CD4-positive, alpha-beta memory T cell (primary cell): ENCODE measurements at regions of chr1 and their contacts with region 1.

Region 1: DNA sequence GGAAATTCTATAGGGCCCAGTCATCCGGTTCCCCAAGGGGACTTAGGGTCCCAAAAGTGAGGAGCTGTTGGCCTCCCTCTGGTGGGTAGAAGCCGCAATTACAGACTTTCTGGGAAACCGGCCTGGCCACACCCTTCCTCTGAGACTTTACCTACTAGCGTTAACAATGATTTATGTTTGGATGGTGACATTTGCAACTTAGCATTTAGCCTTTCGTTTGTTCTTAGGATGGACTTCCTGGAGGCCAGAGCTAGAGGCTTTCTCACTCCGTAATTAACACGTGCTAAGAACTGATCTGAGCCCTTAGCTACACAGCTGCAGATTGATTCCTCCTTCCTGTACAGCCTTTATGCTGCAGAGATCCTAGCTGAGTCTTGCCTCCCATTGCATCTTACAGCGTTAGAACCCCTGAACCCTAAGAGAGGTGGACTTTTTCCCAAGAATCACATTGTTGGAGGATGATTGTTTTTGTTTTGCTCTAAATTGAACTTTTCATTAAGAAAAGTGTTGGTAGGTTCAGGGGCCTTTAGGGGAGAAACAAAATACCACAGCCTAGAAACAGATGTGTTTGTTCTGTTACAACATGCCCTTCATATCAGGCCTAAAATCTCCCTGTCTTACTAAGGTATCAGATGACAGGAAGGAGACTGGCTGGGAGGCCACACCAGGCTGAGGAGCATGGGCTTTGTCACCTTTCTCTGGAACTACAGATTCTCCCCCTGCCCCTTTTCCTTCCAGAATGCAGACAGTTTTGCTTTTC is 2.0 kb downstream of the S100A11 start:
- DNase-seq: peak; percentile 75 to 87 (median 80)
- H3K4me3 ChIP-seq: peak overlapping the region; percentile 73 to 77
- H3K4me3 Mint-ChIP-seq: peak overlapping the region; percentile 91 to 100 (median 100)
- H3K27ac ChIP-seq: peak overlapping the region; percentile 88
- H3K27ac Mint-ChIP-seq: peak overlapping the region; percentile 97 to 100 (median 99)
- H3K4me1 ChIP-seq: peaks cover 38% of the 10 kb centered on the region
- H3K4me1 Mint-ChIP-seq: peaks cover 23 to 54% (median 43%) of the 10 kb centered on the region in 4 donors
- H3K27me3 ChIP-seq: no peaks in the 10 kb centered on the region
- H3K27me3 Mint-ChIP-seq: no peaks in the 10 kb centered on the region

Region 2: DNA sequence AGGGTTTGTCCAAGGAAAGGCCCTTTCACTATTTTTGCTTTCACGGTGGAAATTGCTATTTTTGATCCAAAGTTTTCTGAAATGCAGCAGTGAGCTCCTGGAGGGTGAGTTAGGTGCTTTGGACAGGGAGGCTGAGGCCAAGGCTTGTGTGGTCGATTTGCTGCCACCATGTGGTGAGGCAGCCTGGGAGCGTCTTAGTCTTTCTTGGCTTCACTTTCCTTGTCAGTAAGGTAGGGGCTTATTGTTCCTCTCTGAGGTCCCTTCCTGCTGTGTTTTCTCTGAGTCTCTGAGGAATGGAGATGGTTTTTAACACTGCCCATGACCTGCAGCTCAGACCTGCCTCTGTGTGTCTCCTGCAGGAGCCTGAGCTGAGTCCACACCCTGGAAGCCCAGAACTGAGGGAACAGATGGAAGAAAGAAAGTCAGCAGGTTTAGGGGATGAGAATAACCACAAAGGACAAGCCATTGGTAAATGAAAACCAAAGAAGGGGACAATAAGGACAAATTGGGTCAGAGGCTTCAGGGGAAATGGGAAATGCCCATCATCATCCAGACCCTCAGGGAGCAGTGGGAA is 21.1 kb before region 1 on chr1:
- CTCF ChIA-PET with region 1: interaction called, 11 read pairs
- POLR2A ChIA-PET with region 1: interaction called, 7 read pairs
- intact Hi-C with region 1: no loop called
- DNase-seq: peak in 2 of 5 donors; percentile 31 to 33
- H3K4me3 ChIP-seq: no peak overlapping the region
- H3K4me3 Mint-ChIP-seq: no peak overlapping the region
- H3K27ac ChIP-seq: no peak overlapping the region
- H3K27ac Mint-ChIP-seq: no peak overlapping the region
- H3K4me1 ChIP-seq: no peaks in the 10 kb centered on the region
- H3K4me1 Mint-ChIP-seq: peaks cover 0 to 5% (median 2%) of the 10 kb centered on the region in 4 donors
- H3K27me3 ChIP-seq: no peaks in the 10 kb centered on the region
- H3K27me3 Mint-ChIP-seq: peaks cover 2 to 3% of the 10 kb centered on the region in 2 donors

Region 3: DNA sequence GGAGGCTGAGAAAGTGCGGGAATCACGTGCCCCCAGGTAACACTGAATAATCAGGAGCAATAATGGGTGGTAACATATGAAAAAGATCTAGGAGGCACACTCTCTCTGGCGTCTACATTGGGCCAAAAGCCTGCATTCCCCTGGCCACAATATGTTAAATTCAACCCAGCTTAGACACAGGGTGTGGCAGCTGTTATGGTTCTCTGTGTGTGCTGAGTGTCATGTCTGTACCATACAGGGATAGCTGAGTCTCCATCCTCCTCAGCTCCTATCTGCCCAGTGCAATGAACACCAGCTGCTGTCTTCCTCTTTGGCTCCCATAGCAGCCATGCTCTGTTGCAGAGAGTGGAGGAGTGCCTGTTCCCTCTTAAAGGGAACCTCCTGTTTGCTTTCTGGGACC is 12.4 kb before region 1 on chr1:
- CTCF ChIA-PET with region 1: interaction called, 10 read pairs
- POLR2A ChIA-PET with region 1: interaction called, 3 read pairs
- intact Hi-C with region 1: no loop called
- DNase-seq: no peak
- H3K4me3 ChIP-seq: no peak overlapping the region
- H3K4me3 Mint-ChIP-seq: no peak overlapping the region
- H3K27ac ChIP-seq: no peak overlapping the region
- H3K27ac Mint-ChIP-seq: no peak overlapping the region
- H3K4me1 ChIP-seq: no peaks in the 10 kb centered on the region
- H3K4me1 Mint-ChIP-seq: peaks cover 0 to 11% (median 6%) of the 10 kb centered on the region in 4 donors
- H3K27me3 ChIP-seq: no peaks in the 10 kb centered on the region
- H3K27me3 Mint-ChIP-seq: peaks cover under 1 to 2% of the 10 kb centered on the region in 2 donors